A673 (cell line): ENCODE measurements at regions of chr16 and their contacts with region 1.

Region 1: GRCh38 chr16:56964243-56965148 is 2.7 kb downstream of the CETP start:
- DNase-seq: peak; percentile 92
- H3K4me3 ChIP-seq: no peak overlapping the region
- H3K27ac ChIP-seq: no peak overlapping the region
- H3K4me1 ChIP-seq: peaks cover 4% of the 10 kb centered on the region
- H3K27me3 ChIP-seq: no peaks in the 10 kb centered on the region
- CTCF ChIP-seq: peak; percentile 99

Region 2: GRCh38 chr16:57000271-57001025 is 36.0 kb after region 1 on chr16:
- CTCF ChIA-PET with region 1: no interaction called
- POLR2A ChIA-PET with region 1: no interaction called
- intact Hi-C with region 1: no loop called
- DNase-seq: peak; percentile 49
- H3K4me3 ChIP-seq: no peak overlapping the region
- H3K27ac ChIP-seq: no peak overlapping the region
- H3K4me1 ChIP-seq: no peaks in the 10 kb centered on the region
- H3K27me3 ChIP-seq: no peaks in the 10 kb centered on the region
- CTCF ChIP-seq: no peak

Region 3: DNA sequence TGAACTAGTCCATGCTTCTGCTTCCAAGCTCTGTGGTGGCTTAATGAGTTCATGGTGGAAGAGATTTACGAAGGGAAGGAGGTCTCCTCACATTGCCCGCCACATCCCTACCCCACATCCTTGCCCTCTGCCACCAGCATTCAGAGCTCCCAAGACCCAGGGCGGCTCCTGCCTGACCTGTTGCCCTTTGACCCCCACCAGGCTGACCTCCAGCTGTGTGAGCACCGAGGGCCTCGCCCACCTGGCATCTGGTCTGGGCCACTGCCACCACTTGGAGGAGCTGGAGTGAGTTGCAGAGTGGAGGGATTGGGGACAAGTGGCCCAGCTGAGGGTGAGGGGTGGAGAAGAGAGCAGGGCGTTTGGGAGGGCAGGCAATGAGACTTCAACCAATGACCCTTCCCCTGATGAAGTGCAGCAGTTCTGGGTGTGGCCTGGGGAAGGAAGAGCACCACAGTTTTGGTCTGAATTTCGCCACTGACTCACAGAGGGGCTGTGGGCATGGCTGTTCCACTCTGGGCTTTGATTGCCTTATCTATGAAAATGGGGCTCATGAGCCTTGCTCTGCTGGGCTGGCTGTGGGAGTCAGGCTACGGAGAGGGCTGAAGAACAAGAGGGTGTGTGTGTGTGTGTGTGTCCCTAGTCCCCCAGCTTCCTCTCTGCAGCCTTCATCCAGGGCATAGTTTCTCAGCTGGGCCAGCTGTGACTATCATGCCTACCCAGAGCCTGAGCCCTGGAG is 105.3 kb after region 1 on chr16:
- CTCF ChIA-PET with region 1: no interaction called
- POLR2A ChIA-PET with region 1: no interaction called
- intact Hi-C with region 1: loop called (anchors 5 kb)
- DNase-seq: no peak
- H3K4me3 ChIP-seq: no peak overlapping the region
- H3K27ac ChIP-seq: no peak overlapping the region
- H3K4me1 ChIP-seq: no peaks in the 10 kb centered on the region
- H3K27me3 ChIP-seq: no peaks in the 10 kb centered on the region
- CTCF ChIP-seq: no peak

Region 4: GRCh38 chr16:58063377-58064076 is 1099.0 kb after region 1 on chr16:
- CTCF ChIA-PET with region 1: no interaction called
- POLR2A ChIA-PET with region 1: no interaction called
- intact Hi-C with region 1: no loop called
- DNase-seq: no peak
- H3K4me3 ChIP-seq: no peak overlapping the region
- H3K27ac ChIP-seq: no peak overlapping the region
- H3K4me1 ChIP-seq: no peaks in the 10 kb centered on the region
- H3K27me3 ChIP-seq: no peaks in the 10 kb centered on the region
- CTCF ChIP-seq: no peak